Heart left ventricle (tissue), 16 donors: ENCODE measurements at regions of chr3 and their contacts with region 1.

Region 1: GRCh38 chr3:39135170-39135805 is 18.1 kb downstream of the CSRNP1 start:
- DNase-seq: peak in 4 of 5 donors; percentile 32 to 79 (median 74)
- ATAC-seq: peak; percentile 49 to 65 (median 58)
- H3K4me3 ChIP-seq: no peak overlapping the region
- H3K27ac ChIP-seq: peak overlapping the region in 6 of 12 donors; percentile 27 to 69 (median 48)
- H3K4me1 ChIP-seq: peaks cover 11 to 56% (median 23%) of the 10 kb centered on the region in 12 donors
- H3K27me3 ChIP-seq: no peaks in the 10 kb centered on the region
- CTCF ChIP-seq: no peak
- POLR2A ChIP-seq: peak in 1 of 2 donors; percentile 27

Region 2: DNA sequence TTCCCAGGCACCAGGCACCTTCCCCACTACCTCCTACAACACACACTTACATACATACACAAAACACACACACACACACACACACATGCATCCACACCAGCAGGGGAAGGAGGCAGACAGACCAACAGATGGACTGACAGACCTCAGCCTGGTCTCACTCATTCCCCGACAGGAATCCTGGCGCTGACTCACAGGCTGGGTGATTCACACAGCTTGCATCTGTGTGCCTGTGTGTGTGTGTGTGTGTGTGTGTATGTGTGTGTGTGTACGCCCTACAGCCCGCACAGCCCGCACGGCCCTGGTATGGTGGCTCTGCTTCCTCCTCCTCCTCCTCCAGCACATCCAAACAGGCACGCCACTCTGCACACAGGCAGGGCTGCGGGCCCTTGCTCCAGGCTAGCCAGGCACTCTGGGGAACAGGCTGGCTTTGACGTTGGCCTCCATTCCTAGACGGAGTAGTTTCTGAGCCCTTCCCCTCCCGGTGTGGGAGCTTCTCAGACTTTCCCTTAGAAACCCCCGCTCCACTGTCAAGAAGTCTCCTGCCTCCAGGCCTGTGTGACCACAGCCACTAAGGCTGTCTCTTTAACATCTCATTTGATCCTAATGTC is 11.8 kb after region 1 on chr3:
- intact Hi-C with region 1: loop called in 1 of 10 experiments (anchors 2 kb)
- DNase-seq: peak; percentile 75 to 93 (median 86)
- ATAC-seq: peak; percentile 38 to 71 (median 63)
- H3K4me3 ChIP-seq: peak overlapping the region in 8 of 12 donors; percentile 1 to 96 (median 24)
- H3K27ac ChIP-seq: peak overlapping the region; percentile 6 to 100 (median 82)
- H3K4me1 ChIP-seq: peaks cover 35 to 87% (median 72%) of the 10 kb centered on the region in 12 donors
- H3K27me3 ChIP-seq: no peaks in the 10 kb centered on the region
- CTCF ChIP-seq: no peak
- POLR2A ChIP-seq: peak in 1 of 2 donors; percentile 9